Dendritic cell treated with granulocyte-macrophage colony-stimulating factor and Interleukin-4, amounts not matched to agents 40 ng/mL and 50 ng/mL, for 4 days (primary cell): ENCODE measurements at regions of chr16 and their contacts with region 1.

Region 1: GRCh38 chr16:10806698-10807097 is 11.9 kb downstream of the TVP23A start:
- H3K4me3 Mint-ChIP-seq: peak overlapping the region; percentile 54
- H3K27ac Mint-ChIP-seq: peak overlapping the region; percentile 89
- H3K4me1 Mint-ChIP-seq: peaks cover 87% of the 10 kb centered on the region
- H3K27me3 Mint-ChIP-seq: no peaks in the 10 kb centered on the region

Region 2: GRCh38 chr16:10743610-10744393 is 62.9 kb before region 1 on chr16 and contains the start of gene NUBP1:
- intact Hi-C with region 1: loop called (anchors 5 kb)
- H3K4me3 Mint-ChIP-seq: peak within 1 kb of the TSS; percentile 84
- H3K27ac Mint-ChIP-seq: peak within 1 kb of the TSS; percentile 98
- H3K4me1 Mint-ChIP-seq: peaks cover 74% of the 10 kb centered on the region
- H3K27me3 Mint-ChIP-seq: no peaks in the 10 kb centered on the region

Region 3: GRCh38 chr16:10876799-10877341 is 70.2 kb after region 1 on chr16 and contains the start of gene CIITA:
- intact Hi-C with region 1: loop called (anchors 5 kb)
- H3K4me3 Mint-ChIP-seq: peak within 1 kb of the TSS; percentile 89
- H3K27ac Mint-ChIP-seq: peak within 1 kb of the TSS; percentile 92
- H3K4me1 Mint-ChIP-seq: peaks cover 66% of the 10 kb centered on the region
- H3K27me3 Mint-ChIP-seq: no peaks in the 10 kb centered on the region

Region 4: GRCh38 chr16:11175787-11176341 is 369.2 kb after region 1 on chr16:
- intact Hi-C with region 1: no loop called
- H3K4me3 Mint-ChIP-seq: no peak overlapping the region
- H3K27ac Mint-ChIP-seq: peak overlapping the region; percentile 90
- H3K4me1 Mint-ChIP-seq: peaks cover 85% of the 10 kb centered on the region
- H3K27me3 Mint-ChIP-seq: no peaks in the 10 kb centered on the region